GM23248 (cell line): ENCODE measurements at regions of chr1 and their contacts with region 1.

Region 1: DNA sequence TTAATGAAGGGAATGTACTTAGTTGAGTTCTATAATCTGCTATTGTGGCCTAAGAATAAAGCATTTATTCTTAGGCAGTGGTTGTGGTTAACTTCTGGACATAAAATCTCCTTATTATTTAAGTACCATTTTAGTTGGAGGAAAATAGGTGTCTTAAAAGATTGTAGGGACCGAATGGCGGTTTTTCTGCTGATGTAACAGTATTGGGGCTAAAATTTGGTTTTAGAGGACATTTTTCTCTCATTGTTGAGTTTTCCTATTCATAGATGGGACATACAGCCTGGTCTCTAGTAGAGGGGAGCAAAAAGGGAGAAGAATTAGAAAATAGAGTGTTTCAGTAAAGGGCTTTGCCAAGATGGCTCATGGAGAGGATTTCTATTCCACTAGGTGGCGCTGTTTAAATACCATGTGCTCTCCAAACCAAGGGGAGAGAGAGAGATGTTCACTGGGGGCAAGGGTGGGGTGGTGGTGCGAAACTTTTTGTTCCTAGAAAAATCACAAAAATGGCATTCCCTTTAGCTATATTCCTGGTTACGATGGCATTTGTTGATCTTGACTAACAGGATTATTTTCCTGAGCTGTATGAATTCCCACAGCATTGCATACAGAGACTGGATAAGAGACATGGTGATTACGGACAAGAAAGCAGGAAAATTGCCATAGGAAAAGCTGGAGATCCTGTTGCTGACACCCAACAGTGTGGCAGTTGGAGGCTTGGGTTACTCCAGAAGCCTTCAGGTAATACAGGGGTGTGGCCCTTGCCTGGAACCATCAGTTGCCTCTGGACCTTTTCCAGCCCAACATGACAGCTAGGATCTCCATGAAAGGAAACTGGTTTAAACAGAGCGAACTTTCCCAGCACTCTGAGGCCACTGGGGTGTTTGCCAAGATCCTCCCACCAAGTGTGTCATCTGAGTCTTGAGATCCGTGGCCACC is 18.2 kb upstream of the FCGR2A start:
- DNase-seq: peak; percentile 89
- H3K4me3 ChIP-seq: peak overlapping the region; percentile 66
- H3K27ac ChIP-seq: peak overlapping the region; percentile 22; the same call in 1 of the 2 replicates
- H3K4me1 ChIP-seq: peaks cover 7% of the 10 kb centered on the region; the same call in 1 of the 2 replicates
- H3K27me3 ChIP-seq: peaks cover 35% of the 10 kb centered on the region

Region 2: GRCh38 chr1:161749509-161750407 is 262.7 kb after region 1 on chr1 and contains the start of gene DUSP12:
- in situ Hi-C with region 1: loop called (anchors 10 kb)
- DNase-seq: peak; percentile 99
- H3K4me3 ChIP-seq: peak within 1 kb of the TSS; percentile 94
- H3K27ac ChIP-seq: peak within 1 kb of the TSS; percentile 96
- H3K4me1 ChIP-seq: peaks cover 19% of the 10 kb centered on the region
- H3K27me3 ChIP-seq: no peaks in the 10 kb centered on the region
- total RNA-seq, gene DUSP12: 27.4 and 34.2 TPM in 2 replicates

Region 3: DNA sequence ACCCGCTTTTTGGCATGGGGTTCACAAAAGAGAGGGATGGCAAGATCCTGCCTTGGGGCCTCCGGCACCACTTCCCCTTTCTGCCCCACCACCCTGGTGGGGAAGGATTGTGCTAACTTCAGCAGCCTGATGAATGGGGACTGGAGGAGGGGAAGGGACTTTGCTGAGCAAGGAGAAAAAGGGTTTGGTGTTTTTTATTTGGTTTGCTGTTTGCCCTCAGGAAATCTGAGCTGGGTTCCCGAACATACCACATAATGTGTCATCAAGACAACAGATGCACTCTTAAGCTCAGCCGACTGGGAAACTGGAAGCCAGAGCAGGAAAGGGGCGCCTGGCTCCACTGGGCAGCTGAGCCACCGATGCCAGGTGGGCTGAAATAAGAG is 516.7 kb after region 1 on chr1:
- in situ Hi-C with region 1: no loop called
- DNase-seq: peak; percentile 91
- H3K4me3 ChIP-seq: peak overlapping the region; percentile 66
- H3K27ac ChIP-seq: peak overlapping the region; percentile 83
- H3K4me1 ChIP-seq: peaks cover 15% of the 10 kb centered on the region
- H3K27me3 ChIP-seq: no peaks in the 10 kb centered on the region